Activated B cell treated with CpG ODN at 0.5 μM for 24 hours (primary cell): ENCODE measurements at regions of chr15 and their contacts with region 1.

Region 1: DNA sequence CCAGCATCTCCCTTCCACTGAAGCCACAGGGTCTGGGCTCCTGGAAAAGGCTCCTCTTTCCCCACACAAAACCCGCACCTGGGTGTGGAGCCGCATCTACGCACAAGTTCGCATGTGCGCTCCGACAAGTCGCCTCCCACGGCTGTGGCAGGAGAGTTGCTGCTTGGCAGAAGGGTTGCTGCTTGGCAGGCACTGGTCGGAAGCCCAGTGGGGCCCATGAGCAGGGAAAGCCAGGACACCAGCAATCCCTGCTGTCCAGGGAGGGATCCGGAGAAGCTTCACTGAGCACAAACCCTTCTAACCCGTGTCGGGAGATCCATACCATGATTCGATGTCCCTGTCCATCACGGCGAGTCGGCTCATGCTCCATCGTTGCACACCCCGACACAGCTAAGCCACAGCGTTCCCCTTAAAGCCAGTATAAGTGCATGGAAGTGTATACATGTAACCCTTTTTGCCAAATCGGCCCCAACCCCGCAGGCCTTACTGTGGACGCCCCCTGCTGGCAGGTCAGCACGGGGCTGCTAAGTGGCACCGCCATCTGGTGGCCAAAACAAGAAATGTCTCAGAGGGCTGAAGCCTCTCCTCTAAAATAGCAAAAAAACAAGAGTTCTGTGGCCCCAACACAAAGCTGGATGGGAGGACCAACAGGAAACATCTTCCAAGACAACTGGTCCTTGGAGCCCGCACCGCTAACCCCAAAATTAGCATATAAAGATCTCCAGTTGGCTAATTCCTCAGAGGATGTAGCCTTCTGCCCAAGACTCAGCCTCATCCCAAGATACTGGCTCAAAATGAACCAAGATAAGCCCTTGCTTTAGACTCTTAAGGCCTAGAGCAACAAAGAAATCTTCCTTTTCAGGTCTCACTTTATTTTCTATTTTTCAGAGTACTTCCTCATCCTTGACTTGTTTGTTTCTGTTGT is 8.3 kb downstream of the ANKRD63 start:
- DNase-seq: peak; percentile 86
- ATAC-seq: peak; percentile 82
- H3K4me3 Mint-ChIP-seq: no peak overlapping the region
- H3K27ac Mint-ChIP-seq: no peak overlapping the region
- H3K4me1 Mint-ChIP-seq: peaks cover 25% of the 10 kb centered on the region
- H3K27me3 Mint-ChIP-seq: peaks cover 2% of the 10 kb centered on the region
- CTCF ChIP-seq: peak; percentile 97

Region 2: GRCh38 chr15:39788108-39788507 is 486.5 kb before region 1 on chr15:
- CTCF ChIA-PET with region 1: interaction called, 14 read pairs
- POLR2A ChIA-PET with region 1: no interaction called
- intact Hi-C with region 1: loop called (anchors 1 kb)
- DNase-seq: no peak
- ATAC-seq: no peak
- H3K4me3 Mint-ChIP-seq: no peak overlapping the region
- H3K27ac Mint-ChIP-seq: no peak overlapping the region
- H3K4me1 Mint-ChIP-seq: peaks cover 30% of the 10 kb centered on the region
- H3K27me3 Mint-ChIP-seq: no peaks in the 10 kb centered on the region
- CTCF ChIP-seq: no peak

Region 3: DNA sequence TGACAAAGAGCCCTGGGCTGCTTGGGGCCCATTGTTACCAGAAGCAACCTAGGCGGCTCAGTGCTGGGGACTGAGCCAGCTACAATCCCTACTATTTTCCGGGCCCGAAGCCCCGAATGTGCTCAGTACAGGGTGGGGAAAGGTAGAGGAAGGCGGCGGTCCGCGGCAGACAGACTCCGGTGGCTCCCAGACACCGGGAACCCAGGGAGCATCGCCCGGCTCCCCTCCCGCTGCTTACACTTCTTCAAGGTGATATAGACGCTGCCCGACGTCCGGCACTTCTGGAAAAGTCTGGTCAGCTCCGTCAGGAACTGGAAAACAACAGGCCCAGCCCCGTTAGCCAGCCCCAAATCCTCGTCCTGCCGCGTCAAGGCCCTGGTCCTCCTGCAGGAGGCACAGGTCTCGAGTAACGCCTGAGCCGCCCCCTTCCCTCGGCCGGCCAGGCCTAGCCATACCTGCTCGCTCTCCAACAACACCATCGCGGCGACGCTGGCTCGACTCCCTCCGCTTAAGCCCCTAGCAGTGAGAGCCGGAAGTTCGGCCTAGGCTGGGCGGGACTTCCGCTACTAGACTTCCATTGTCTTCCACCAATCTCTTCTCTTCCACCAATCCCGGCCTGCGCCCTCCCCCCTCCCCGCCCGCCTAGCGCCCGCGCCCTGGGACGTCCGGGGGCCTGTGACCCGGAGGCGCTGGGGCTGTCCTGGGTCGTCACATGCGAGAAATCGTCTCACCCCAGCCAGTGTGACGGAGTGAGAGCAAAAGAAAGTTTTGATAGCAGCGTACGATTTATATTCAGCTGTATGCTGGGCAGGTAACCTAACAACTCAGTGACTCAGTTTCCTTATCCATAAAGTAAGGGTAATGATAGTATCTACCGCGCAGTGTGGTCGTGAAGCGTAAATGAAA is 235.7 kb before region 1 on chr15 and contains the start of gene SRP14:
- CTCF ChIA-PET with region 1: interaction called, 13 read pairs
- POLR2A ChIA-PET with region 1: interaction called, 4 read pairs
- intact Hi-C with region 1: no loop called
- DNase-seq: peak; percentile 89
- ATAC-seq: peak; percentile 97
- H3K4me3 Mint-ChIP-seq: peak within 1 kb of the TSS; percentile 99
- H3K27ac Mint-ChIP-seq: peak within 1 kb of the TSS; percentile 95
- H3K4me1 Mint-ChIP-seq: peaks cover 30% of the 10 kb centered on the region
- H3K27me3 Mint-ChIP-seq: no peaks in the 10 kb centered on the region
- CTCF ChIP-seq: no peak
- total RNA-seq, gene SRP14: 183 and 217 TPM in 2 replicates

Region 4: DNA sequence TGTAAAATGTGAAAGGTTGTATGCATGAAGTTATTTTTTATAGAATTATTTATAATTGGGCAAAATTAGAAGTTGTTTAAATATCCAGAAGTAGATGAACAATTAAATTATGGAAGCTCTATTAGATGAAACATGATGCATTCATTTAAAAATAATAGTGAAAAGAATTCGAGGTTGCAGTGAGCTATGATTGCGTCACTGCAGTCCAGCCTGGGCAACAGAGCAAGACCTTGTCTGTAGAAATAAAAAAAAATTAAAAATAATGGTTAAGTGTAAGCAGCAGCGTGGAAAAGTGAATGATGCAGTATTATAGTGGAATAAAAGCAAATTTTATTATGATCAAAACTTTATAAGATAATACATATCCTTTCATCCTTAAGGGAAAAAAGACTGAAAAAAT is 99.5 kb before region 1 on chr15:
- CTCF ChIA-PET with region 1: no interaction called
- POLR2A ChIA-PET with region 1: no interaction called
- intact Hi-C with region 1: no loop called
- DNase-seq: no peak
- ATAC-seq: no peak
- H3K4me3 Mint-ChIP-seq: no peak overlapping the region
- H3K27ac Mint-ChIP-seq: no peak overlapping the region
- H3K4me1 Mint-ChIP-seq: no peaks in the 10 kb centered on the region
- H3K27me3 Mint-ChIP-seq: no peaks in the 10 kb centered on the region
- CTCF ChIP-seq: no peak

Region 5: DNA sequence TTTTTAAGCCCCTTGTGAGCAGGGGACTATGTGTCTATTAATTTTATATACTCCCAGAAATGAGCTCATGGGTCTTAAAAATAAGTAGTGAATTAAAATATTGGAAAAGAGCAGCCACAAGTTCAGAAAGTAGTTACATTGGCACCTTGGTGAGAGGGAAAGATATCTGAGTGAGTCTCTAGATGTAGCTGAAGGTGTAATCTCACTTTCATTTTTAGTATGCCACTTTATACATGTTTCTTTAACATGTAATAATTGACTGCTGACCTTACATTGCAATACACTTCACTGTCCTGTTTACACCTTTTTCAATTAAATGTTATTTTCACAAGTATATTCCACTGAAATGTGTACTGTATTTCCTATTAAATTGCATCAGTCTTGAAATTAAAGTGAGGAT is 47.9 kb before region 1 on chr15:
- CTCF ChIA-PET with region 1: interaction called, 13 read pairs
- POLR2A ChIA-PET with region 1: no interaction called
- intact Hi-C with region 1: no loop called
- DNase-seq: no peak
- ATAC-seq: no peak
- H3K4me3 Mint-ChIP-seq: no peak overlapping the region
- H3K27ac Mint-ChIP-seq: no peak overlapping the region
- H3K4me1 Mint-ChIP-seq: no peaks in the 10 kb centered on the region
- H3K27me3 Mint-ChIP-seq: no peaks in the 10 kb centered on the region
- CTCF ChIP-seq: no peak

Region 6: GRCh38 chr15:40307421-40308211 is 33.0 kb after region 1 on chr15 and contains the start of gene PLCB2:
- CTCF ChIA-PET with region 1: interaction called, 124 read pairs
- POLR2A ChIA-PET with region 1: interaction called, 7 read pairs
- intact Hi-C with region 1: loop called (anchors 1 kb)
- DNase-seq: peak; percentile 67
- ATAC-seq: peak; percentile 77
- H3K4me3 Mint-ChIP-seq: peak within 1 kb of the TSS; percentile 93
- H3K27ac Mint-ChIP-seq: peak within 1 kb of the TSS; percentile 96
- H3K4me1 Mint-ChIP-seq: peaks cover 44% of the 10 kb centered on the region
- H3K27me3 Mint-ChIP-seq: no peaks in the 10 kb centered on the region
- CTCF ChIP-seq: no peak
- total RNA-seq, gene PLCB2: 109 and 126 TPM in 2 replicates

Region 7: GRCh38 chr15:40344631-40345120 is 70.1 kb after region 1 on chr15:
- CTCF ChIA-PET with region 1: interaction called, 187 read pairs
- POLR2A ChIA-PET with region 1: no interaction called
- intact Hi-C with region 1: no loop called
- DNase-seq: peak; percentile 46
- ATAC-seq: peak; percentile 95
- H3K4me3 Mint-ChIP-seq: no peak overlapping the region
- H3K27ac Mint-ChIP-seq: no peak overlapping the region
- H3K4me1 Mint-ChIP-seq: no peaks in the 10 kb centered on the region
- H3K27me3 Mint-ChIP-seq: no peaks in the 10 kb centered on the region
- CTCF ChIP-seq: peak; percentile 16

Region 8: DNA sequence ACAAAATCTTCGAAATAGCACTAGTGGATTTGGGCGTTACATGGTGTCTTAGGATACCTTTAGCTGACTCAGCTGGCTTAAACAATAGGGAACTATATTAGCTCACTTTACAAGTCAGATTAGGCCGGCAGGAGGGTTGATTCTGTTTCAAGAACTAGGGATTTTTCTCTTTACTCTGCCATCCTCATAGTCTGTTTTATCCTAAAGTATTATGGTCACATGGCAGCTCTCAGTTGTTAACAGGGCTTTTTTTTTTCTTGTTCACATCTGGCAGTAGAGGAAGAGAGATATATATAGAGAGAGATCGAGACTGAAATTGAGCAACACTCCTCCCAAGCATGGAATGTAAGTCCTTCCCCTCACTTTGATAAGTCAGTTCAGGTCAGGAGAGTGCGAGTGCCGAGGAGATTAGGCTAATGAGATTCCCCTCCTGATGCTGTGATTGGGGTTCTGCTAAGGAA is 989.3 kb after region 1 on chr15:
- CTCF ChIA-PET with region 1: no interaction called
- POLR2A ChIA-PET with region 1: no interaction called
- intact Hi-C with region 1: no loop called
- DNase-seq: no peak
- ATAC-seq: no peak
- H3K4me3 Mint-ChIP-seq: no peak overlapping the region
- H3K27ac Mint-ChIP-seq: no peak overlapping the region
- H3K4me1 Mint-ChIP-seq: peaks cover 13% of the 10 kb centered on the region
- H3K27me3 Mint-ChIP-seq: no peaks in the 10 kb centered on the region
- CTCF ChIP-seq: no peak